CD14-positive monocyte (primary cell): ENCODE measurements at regions of chr17 and their contacts with region 1.

Region 1: DNA sequence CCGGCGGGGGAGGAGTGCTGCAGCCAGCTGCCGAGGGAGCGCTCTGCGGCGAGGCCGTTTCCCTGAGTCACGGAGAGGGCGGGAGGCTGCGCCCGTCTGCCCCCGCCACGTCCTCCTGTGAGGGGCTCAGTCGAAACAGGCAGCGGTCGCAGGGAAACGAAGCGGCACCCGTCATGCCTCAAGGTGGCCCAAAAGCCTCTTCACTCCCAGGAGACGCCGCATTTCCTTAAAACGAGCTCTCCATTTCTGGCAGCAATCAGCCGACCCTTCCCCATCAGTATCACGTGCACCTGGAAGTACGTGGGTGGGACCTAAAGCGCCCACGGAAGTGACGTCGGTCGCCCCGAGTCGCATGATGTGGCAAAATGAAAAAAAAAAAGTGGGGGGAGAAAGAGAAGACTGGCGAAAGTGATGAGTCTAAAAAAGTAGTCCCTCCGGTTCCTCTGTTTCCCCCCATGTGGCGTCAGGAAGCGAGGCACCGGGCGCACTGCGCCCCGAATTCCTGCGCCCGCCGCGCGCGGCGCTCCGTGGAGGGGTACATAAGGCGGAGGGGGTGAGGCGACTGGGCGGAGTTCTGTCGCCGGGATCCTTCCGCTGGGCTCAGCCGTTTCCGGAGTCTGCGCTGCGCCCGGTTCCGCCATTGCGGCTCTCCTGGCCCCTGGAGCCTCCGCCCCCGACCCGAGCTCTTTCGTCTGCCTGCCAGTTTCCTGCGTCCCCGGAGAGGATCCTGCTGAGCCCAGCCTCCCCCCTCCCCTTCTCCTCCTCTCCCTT is at the start of gene CLTC:
- DNase-seq: peak; percentile 91 to 98 (median 97)
- H3K4me3 ChIP-seq: peak within 1 kb of the TSS; percentile 71 to 100 (median 78)
- H3K4me3 Mint-ChIP-seq: peak within 1 kb of the TSS; percentile 92 to 96
- H3K27ac ChIP-seq: peak within 1 kb of the TSS; percentile 98 to 100
- H3K27ac Mint-ChIP-seq: peak within 1 kb of the TSS; percentile 99 to 100 (median 99)
- H3K4me1 ChIP-seq: peaks cover 35 to 51% of the 10 kb centered on the region in 2 donors
- H3K4me1 Mint-ChIP-seq: peaks cover 41% of the 10 kb centered on the region
- H3K27me3 ChIP-seq: no peaks in the 10 kb centered on the region
- H3K27me3 Mint-ChIP-seq: peaks cover 0 to 1% (median 0%) of the 10 kb centered on the region in 3 donors
- CTCF ChIP-seq: no peak
- polyA plus RNA-seq, gene CLTC: 63.3 to 102 (median 65.1) TPM

Region 2: GRCh38 chr17:59565970-59566602 is 53.4 kb before region 1 on chr17:
- intact Hi-C with region 1: no loop called
- DNase-seq: peak; percentile 43 to 66 (median 58)
- H3K4me3 ChIP-seq: peak overlapping the region; percentile 80 to 100 (median 95)
- H3K4me3 Mint-ChIP-seq: peak overlapping the region; percentile 100
- H3K27ac ChIP-seq: peak overlapping the region; percentile 79 to 95
- H3K27ac Mint-ChIP-seq: peak overlapping the region; percentile 98 to 100 (median 99)
- H3K4me1 ChIP-seq: peaks cover 19% of the 10 kb centered on the region in 2 donors
- H3K4me1 Mint-ChIP-seq: peaks cover 16% of the 10 kb centered on the region
- H3K27me3 ChIP-seq: no peaks in the 10 kb centered on the region
- H3K27me3 Mint-ChIP-seq: peaks cover 0 to 2% (median 0%) of the 10 kb centered on the region in 3 donors
- CTCF ChIP-seq: no peak

Region 3: GRCh38 chr17:59668816-59669215 is 49.3 kb after region 1 on chr17:
- intact Hi-C with region 1: loop called in 1 of 2 experiments (anchors 5 kb)
- DNase-seq: peak; percentile 28 to 64 (median 60)
- H3K4me3 ChIP-seq: peak overlapping the region; percentile 3 to 63 (median 20)
- H3K4me3 Mint-ChIP-seq: peak overlapping the region in 1 of 2 donors; percentile 75
- H3K27ac ChIP-seq: peak overlapping the region in 1 of 2 donors; percentile 68
- H3K27ac Mint-ChIP-seq: peak overlapping the region; percentile 77 to 88 (median 87)
- H3K4me1 ChIP-seq: peaks cover 33 to 36% of the 10 kb centered on the region in 2 donors
- H3K4me1 Mint-ChIP-seq: peaks cover 35% of the 10 kb centered on the region
- H3K27me3 ChIP-seq: no peaks in the 10 kb centered on the region
- H3K27me3 Mint-ChIP-seq: no peaks in the 10 kb centered on the region
- CTCF ChIP-seq: no peak

Region 4: DNA sequence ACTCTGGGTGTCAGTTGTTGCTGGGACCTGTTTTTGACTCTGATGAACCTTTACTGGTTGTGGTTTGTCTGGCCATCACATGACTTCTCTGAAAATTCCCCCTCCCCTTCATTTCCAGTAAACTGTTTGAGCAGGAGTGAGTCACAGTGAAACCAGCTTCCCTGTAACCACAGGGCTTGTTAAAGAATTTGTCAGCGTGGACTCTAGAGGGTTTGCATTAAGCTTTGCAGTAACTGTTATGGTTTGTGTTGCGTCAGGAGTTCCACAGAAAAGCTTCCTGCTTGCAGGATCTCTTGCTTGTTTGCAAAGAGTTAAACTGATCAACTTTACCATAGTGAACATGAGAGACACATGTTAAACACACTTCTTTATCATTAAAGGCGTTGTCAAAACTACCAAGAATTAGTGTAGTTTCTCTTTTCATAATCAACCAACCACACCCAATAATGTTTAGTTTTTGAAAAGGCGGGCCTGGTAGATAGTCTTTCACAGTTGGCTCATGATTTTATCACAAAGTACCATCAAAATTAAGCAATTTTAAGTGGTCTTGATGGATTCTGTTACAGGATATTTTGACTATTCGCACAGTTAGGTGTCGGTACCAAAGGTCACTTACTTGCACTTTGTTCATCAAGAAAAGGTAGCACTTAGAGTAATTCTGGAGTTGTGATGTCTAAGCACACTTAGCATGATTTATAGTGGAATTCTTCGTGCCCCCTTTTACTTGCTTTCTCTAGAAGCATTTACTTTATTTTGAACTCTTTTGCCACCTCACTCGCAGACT is 167.2 kb after region 1 on chr17:
- intact Hi-C with region 1: no loop called
- DNase-seq: peak; percentile 96 to 99 (median 99)
- H3K4me3 ChIP-seq: peak overlapping the region in 2 of 3 experiments; percentile 14 to 64
- H3K4me3 Mint-ChIP-seq: peak overlapping the region; percentile 56 to 83
- H3K27ac ChIP-seq: peak overlapping the region; percentile 94 to 95
- H3K27ac Mint-ChIP-seq: peak overlapping the region; percentile 94 to 98 (median 98)
- H3K4me1 ChIP-seq: peaks cover 83 to 91% of the 10 kb centered on the region in 2 donors
- H3K4me1 Mint-ChIP-seq: peaks cover 65% of the 10 kb centered on the region
- H3K27me3 ChIP-seq: no peaks in the 10 kb centered on the region
- H3K27me3 Mint-ChIP-seq: peaks cover 0 to 2% (median 0%) of the 10 kb centered on the region in 3 donors
- CTCF ChIP-seq: no peak